Heart left ventricle (tissue), 16 donors: ENCODE measurements at regions of chr22 and their contacts with region 1.

Region 1: DNA sequence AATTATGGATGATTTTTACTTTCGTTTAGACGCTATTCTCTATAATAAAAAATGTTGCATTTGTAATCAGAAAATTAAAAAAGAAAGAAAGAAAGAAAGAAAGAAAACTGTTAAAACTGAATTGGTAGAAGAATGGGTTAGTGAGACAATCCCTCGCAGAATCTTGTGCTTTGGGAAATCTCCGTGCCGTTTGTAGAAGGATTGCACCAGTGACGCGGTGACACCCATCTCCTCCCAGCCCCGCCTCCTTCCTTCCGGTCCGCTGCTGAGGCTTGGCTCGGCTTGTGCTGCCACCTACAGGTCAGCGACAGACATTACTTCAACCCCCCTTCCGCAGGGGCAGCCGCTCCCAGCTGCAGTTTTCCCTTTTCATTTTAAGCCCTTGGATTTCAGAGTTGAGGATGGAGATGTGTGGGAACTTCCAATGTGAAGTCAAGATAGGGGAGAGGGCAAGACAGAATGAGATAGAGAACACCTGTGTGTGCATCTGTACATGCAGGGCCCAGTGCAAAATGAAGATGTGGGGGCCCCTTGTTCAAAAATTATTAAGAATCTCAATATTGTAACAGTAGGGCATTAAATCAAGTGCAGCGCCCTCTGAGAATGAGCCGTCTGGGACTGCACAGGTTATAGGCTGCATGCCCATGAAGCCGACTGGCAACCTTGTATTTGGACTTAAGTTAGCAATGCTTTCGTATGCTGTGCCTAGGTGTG is 41.1 kb downstream of the TST start:
- DNase-seq: peak; percentile 90 to 94 (median 91)
- ATAC-seq: peak; percentile 95 to 98 (median 98)
- H3K4me3 ChIP-seq: peak overlapping the region in 11 of 12 donors; percentile 22 to 57 (median 48)
- H3K27ac ChIP-seq: peak overlapping the region in 3 of 12 donors; percentile 22 to 28 (median 25)
- H3K4me1 ChIP-seq: peaks cover 0 to 9% (median 3%) of the 10 kb centered on the region in 12 donors
- H3K27me3 ChIP-seq: peaks cover 0 to 12% (median 4%) of the 10 kb centered on the region in 9 donors
- CTCF ChIP-seq: peak; percentile 91 to 96 (median 95)
- POLR2A ChIP-seq: no peak

Region 2: DNA sequence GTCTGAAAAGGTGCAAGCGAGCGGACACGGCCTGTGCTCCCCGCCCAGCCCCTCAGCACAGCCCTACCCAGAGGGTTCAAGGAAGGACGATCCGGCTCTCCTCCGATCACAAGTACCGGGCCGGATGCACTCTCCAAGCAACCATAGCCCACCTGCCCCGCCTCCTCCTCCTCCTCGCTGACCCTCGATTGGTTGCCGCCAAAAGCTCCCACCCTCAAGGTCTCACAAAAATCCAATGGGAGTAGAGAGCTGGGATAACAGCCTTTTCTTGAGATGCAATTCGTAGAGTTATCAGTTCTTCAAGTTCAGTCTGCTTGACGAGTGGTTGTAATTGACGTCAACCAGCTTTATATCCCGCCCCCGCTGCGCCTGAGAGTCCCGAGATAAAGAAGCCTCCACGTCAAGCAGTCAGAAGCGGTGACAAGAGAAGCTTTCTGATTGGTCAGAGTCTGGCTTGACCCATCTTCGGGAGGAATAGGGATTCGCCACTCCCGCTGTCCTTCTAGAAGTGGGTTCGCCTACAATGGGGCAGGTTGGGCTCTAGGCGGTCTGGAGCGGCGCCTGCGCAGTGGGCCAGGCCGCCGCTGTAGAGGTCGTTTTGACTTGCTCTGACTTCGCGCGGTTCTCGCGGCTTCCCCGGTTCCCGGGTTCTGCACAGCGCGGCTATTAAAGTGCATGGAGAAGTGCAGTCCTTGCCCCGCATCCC is 202.0 kb before region 1 on chr22 and contains the start of gene IFT27:
- intact Hi-C with region 1: loop called in 7 of 10 experiments (anchors 2 to 5 kb)
- DNase-seq: peak; percentile 96 to 99 (median 99)
- ATAC-seq: peak; percentile 98 to 99 (median 98)
- H3K4me3 ChIP-seq: peak within 1 kb of the TSS; percentile 40 to 98 (median 84)
- H3K27ac ChIP-seq: peak within 1 kb of the TSS; percentile 25 to 92 (median 84)
- H3K4me1 ChIP-seq: peaks cover 0 to 18% (median 11%) of the 10 kb centered on the region in 12 donors
- H3K27me3 ChIP-seq: no peaks in the 10 kb centered on the region
- CTCF ChIP-seq: no peak
- POLR2A ChIP-seq: peak in 1 of 2 donors; percentile 62
- total RNA-seq, gene IFT27: 18.9 to 33.8 (median 25.8) TPM

Region 3: GRCh38 chr22:36856121-36856791 is 121.8 kb before region 1 on chr22:
- intact Hi-C with region 1: loop called in 9 of 10 experiments (anchors 1 to 5 kb)
- DNase-seq: peak; percentile 89 to 95 (median 91)
- ATAC-seq: peak; percentile 77 to 93 (median 90)
- H3K4me3 ChIP-seq: no peak overlapping the region
- H3K27ac ChIP-seq: no peak overlapping the region
- H3K4me1 ChIP-seq: peaks cover 0 to 42% (median 8%) of the 10 kb centered on the region in 12 donors
- H3K27me3 ChIP-seq: peaks cover 0 to 11% (median 0%) of the 10 kb centered on the region in 9 donors
- CTCF ChIP-seq: peak; percentile 99 to 100 (median 100)
- POLR2A ChIP-seq: no peak

Region 4: DNA sequence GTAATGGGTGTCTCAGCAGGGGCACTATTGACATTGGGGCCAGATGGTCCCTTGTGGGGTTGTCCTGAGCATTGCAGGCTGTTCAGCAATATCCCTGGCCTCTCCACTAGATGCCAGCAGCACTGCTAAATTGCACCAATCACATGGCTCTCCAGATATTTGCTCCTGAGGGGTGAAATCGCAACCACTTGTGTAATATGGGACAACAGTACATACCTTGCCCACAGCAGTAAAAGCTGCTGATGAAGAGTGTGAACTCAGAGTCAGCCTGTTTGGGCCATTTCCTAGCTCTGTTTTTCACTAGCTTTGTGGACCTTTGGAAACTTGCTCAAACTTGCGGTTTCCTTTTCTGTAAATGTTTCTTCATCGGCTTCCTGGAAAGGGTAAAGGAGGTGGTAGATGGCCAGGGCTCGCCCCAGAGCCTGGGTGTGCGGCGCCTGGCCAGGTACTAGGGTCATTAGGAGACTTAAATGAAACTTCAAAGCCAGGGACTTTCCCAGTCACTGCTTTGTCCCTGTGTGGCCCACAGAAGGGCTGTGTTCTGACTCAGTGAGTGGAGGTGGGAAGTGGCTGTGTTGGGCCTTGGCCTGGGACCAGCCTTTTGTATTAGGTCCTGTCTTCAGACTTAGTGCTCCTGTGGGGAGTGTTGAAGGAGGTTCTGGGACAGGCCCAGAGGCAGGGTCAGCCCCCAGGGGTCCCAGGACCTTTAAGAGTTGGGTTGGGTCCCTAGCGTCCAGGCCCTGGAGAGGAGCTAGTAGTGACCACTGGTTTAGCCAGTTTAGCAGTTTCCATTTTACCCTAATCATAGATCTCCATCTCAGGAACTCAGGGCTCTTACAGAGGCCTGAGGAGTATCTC is 104.2 kb before region 1 on chr22:
- intact Hi-C with region 1: loop called in 6 of 10 experiments (anchors 2 to 5 kb)
- DNase-seq: peak in 3 of 5 donors; percentile 30 to 44 (median 32)
- ATAC-seq: peak; percentile 78 to 87 (median 84)
- H3K4me3 ChIP-seq: peak overlapping the region in 1 of 12 donors; percentile 2
- H3K27ac ChIP-seq: peak overlapping the region in 11 of 12 donors; percentile 3 to 87 (median 50)
- H3K4me1 ChIP-seq: peaks cover 0 to 25% (median 11%) of the 10 kb centered on the region in 12 donors
- H3K27me3 ChIP-seq: peaks cover 0 to 28% (median 4%) of the 10 kb centered on the region in 9 donors
- CTCF ChIP-seq: peak; percentile 20 to 58 (median 46)
- POLR2A ChIP-seq: no peak

Region 5: DNA sequence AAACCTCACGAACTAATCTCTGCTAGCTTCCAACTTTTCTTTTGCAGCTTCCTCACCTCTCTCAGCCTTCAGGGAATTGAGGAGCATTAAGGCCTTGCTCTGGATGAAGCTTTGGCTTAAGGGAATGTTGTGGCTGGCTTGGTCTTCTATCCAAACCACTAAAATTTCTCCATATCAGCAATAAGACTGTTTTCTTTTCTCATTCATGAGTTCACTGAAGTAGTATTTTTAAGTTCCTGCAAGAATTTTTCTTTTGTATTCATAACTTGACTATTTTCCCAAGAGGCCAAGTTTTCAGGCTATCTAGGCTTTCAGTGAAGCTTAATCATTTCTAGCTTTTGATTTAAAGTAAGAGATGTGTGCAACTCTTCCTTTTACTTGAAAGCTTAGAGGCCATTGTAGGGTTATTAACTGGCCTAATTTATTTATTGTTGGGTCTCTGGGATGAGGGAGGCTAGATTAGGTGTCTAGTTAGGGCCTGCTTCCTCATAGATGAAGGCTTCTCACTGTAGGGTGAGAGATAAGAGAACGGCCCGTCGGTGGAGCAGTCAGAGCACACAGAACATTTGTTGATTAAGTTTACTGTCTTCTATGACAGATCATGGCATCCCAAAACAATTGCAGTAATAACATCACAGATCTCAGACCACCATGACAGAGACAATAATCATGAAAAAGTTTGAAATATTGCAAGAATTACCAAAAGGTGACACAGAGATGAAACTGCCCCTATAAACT is 31.5 kb before region 1 on chr22:
- intact Hi-C with region 1: no loop called
- DNase-seq: no peak
- ATAC-seq: no peak
- H3K4me3 ChIP-seq: no peak overlapping the region
- H3K27ac ChIP-seq: no peak overlapping the region
- H3K4me1 ChIP-seq: no peaks in the 10 kb centered on the region
- H3K27me3 ChIP-seq: peaks cover 0 to 8% (median 0%) of the 10 kb centered on the region in 9 donors
- CTCF ChIP-seq: peak in 2 of 12 donors; percentile 11 to 15
- POLR2A ChIP-seq: no peak

Region 6: DNA sequence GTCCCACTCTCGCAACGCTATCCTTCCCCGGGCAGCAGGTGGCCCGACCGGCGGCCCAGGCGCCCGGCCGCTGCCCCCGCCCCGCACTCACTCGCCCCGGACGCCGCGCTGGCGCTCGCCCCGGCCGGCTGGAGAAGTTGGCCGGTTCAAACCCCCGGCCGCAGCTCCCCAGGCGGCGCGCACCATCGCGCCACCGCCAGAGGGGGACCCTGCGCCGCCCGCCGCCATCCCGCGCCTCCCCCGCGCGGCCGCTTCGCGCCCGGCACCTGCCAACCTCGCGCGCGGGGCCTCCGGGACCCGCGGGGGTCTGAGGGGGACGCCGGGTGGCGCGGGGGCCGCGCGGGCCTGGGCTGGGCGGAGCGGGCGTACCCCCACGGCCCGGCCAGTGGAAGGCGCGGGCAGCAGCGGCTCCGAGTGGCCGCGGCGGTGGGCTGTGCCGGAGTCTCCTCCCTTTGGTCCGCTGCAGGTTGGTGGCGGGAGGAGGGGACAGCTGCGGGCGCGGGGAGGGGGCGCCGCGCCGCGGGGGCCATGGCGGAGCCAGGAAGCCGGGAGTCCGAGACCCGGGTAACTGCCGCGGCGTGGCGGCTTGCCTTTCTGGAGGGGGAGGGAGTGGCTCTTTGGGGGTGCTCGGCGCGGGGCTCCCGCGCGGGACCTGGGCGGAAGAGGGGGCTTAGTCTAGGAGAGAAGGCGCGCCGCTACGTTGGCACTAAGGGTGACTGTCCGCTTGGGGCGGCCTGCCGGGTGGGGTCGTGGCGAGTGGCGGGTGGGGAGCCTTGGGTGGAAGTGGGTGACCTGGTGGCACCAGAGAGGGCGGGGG is 41.4 kb after region 1 on chr22 and contains the starts of genes MPST and TST:
- intact Hi-C with region 1: loop called in 1 of 10 experiments (anchors 2 kb)
- DNase-seq: peak; percentile 86 to 91 (median 90)
- ATAC-seq: peak; percentile 72 to 90 (median 88)
- H3K4me3 ChIP-seq: peak within 1 kb of the TSS; percentile 66 to 99 (median 90)
- H3K27ac ChIP-seq: peak within 1 kb of the TSS; percentile 87 to 98 (median 96)
- H3K4me1 ChIP-seq: peaks cover 9 to 80% (median 49%) of the 10 kb centered on the region in 12 donors
- H3K27me3 ChIP-seq: no peaks in the 10 kb centered on the region
- CTCF ChIP-seq: peak in 6 of 12 donors; percentile 9 to 41 (median 18)
- POLR2A ChIP-seq: peak; percentile 27 to 85
- total RNA-seq, gene MPST: 27.5 to 157 (median 52.9) TPM
- total RNA-seq, gene TST: 35.8 to 143 (median 58.1) TPM